ENCODE measurements at regions of chr17 and their contacts with region 1.

Region 1: DNA sequence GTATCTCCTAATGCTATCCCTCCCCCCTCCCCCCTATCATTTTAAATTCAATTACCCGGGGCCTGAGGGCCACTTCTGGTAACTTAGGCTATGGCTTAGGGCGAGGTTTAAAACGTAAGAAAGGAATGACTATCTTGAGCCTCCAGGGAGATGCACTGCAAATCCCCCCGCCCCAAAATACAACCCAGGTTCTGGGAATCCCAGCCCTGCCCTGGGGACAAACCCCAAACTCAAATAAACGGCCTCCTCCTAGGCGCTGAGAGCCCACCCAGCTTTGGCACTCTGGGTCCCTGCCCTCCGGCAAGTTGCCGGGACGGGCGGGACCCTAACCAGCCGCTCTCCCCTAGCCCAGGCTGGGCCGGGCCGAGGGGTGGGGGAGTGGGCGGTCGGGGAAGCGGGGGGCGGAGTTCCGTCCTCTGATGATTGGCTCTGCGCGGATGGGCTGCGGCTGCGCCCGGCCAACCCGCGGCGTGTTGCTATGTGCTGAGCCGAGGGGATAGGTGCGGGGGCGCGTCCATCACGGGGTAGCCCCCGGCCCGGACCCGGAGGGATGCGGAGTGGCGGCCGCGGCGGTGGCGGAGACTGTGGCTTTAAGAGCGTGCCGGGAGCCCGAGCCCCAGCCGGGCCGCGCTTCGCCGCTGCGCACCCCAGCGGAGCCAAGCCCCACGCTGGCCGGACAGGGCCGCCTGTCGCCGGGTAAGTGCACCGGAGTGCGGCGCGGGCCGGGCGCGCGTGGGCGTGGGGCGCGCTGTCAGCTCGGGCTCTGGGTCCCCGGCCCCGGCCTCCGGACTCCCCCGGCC is at the start of gene YPEL2:
- DNase-seq: peak; percentile 91
- H3K4me3 Mint-ChIP-seq: peak within 1 kb of the TSS; percentile 85
- H3K27ac Mint-ChIP-seq: peak within 1 kb of the TSS; percentile 89
- H3K4me1 Mint-ChIP-seq: peaks cover 69% of the 10 kb centered on the region
- H3K27me3 Mint-ChIP-seq: no peaks in the 10 kb centered on the region
- total RNA-seq, gene YPEL2: 9.4 to 13.2 TPM

Region 2: DNA sequence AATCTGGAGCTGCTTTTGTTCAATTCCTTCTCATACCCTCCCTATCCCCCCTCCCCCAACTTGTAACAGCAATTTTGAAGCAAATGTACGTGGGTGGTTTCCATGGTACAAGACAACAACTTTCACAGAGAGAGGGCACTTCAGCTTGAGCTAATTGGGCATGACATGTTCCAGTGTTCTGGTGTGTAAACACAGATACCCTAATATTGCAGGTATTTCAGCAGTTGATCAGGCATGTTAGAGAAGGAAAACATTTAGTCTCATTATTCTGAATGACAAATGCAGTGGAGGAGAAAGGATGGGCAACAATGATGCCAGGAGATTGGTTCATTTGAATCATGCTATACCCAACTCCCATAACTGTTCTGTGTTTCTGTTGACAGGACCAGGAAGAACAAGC is 362.2 kb before region 1 on chr17:
- CTCF ChIA-PET with region 1: no interaction called
- POLR2A ChIA-PET with region 1: no interaction called
- DNase-seq: no peak
- H3K4me3 Mint-ChIP-seq: no peak overlapping the region
- H3K27ac Mint-ChIP-seq: no peak overlapping the region
- H3K4me1 Mint-ChIP-seq: peaks cover 12% of the 10 kb centered on the region
- H3K27me3 Mint-ChIP-seq: peaks cover 10% of the 10 kb centered on the region

Region 3: DNA sequence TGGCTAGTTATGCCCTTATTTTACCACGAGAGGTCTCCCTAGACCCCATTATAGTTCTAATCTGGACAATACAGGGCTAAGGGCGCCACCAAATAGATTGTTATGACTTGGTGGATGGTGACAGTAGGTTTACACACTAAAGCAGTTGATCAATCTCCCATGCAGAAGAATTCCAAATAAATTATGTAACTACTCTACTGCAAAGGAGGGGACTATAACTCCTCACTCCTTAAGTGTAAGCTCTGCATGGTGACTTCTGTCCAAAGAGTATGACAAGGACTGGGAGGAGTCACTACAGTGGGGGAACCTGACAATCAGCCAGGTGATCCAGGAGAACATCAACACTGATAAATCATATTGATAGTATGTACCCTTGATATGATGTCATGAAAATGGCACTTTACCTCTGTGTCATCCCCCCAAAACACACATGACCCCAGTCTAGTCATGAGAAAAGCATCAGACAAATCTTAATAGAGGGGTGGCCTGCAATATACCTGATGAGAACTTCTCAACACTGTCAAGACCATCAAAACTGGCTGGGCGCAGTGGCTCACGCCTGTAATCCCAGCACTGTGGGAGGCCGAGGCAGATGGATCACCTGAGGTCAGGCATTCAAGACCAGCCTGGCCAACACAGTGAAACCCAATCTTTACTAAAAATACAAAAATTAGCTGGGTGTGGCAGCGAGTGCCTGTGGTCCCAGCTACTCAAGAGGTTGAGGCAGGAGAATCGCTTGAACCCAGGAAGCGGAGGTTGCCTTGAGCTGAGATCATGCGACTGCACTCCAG is 20.0 kb before region 1 on chr17:
- CTCF ChIA-PET with region 1: interaction called, 22 read pairs
- POLR2A ChIA-PET with region 1: no interaction called
- DNase-seq: peak; percentile 63
- H3K4me3 Mint-ChIP-seq: no peak overlapping the region
- H3K27ac Mint-ChIP-seq: no peak overlapping the region
- H3K4me1 Mint-ChIP-seq: peaks cover 7% of the 10 kb centered on the region
- H3K27me3 Mint-ChIP-seq: peaks cover 1% of the 10 kb centered on the region

Region 4: GRCh38 chr17:59361916-59362810 is 30.8 kb after region 1 on chr17:
- CTCF ChIA-PET with region 1: interaction called, 10 read pairs
- POLR2A ChIA-PET with region 1: interaction called, 4 read pairs
- DNase-seq: peak; percentile 68
- H3K4me3 Mint-ChIP-seq: peak overlapping the region; percentile 73
- H3K27ac Mint-ChIP-seq: peak overlapping the region; percentile 86
- H3K4me1 Mint-ChIP-seq: peaks cover 85% of the 10 kb centered on the region
- H3K27me3 Mint-ChIP-seq: no peaks in the 10 kb centered on the region

Region 5: GRCh38 chr17:59399900-59400299 is 68.6 kb after region 1 on chr17:
- CTCF ChIA-PET with region 1: no interaction called
- POLR2A ChIA-PET with region 1: no interaction called
- DNase-seq: no peak
- H3K4me3 Mint-ChIP-seq: no peak overlapping the region
- H3K27ac Mint-ChIP-seq: no peak overlapping the region
- H3K4me1 Mint-ChIP-seq: no peaks in the 10 kb centered on the region
- H3K27me3 Mint-ChIP-seq: no peaks in the 10 kb centered on the region

Region 6: GRCh38 chr17:59427425-59427921 is 96.1 kb after region 1 on chr17:
- CTCF ChIA-PET with region 1: interaction called, 10 read pairs
- POLR2A ChIA-PET with region 1: no interaction called
- DNase-seq: peak; percentile 18
- H3K4me3 Mint-ChIP-seq: no peak overlapping the region
- H3K27ac Mint-ChIP-seq: no peak overlapping the region
- H3K4me1 Mint-ChIP-seq: peaks cover 18% of the 10 kb centered on the region
- H3K27me3 Mint-ChIP-seq: peaks cover 4% of the 10 kb centered on the region

Region 7: DNA sequence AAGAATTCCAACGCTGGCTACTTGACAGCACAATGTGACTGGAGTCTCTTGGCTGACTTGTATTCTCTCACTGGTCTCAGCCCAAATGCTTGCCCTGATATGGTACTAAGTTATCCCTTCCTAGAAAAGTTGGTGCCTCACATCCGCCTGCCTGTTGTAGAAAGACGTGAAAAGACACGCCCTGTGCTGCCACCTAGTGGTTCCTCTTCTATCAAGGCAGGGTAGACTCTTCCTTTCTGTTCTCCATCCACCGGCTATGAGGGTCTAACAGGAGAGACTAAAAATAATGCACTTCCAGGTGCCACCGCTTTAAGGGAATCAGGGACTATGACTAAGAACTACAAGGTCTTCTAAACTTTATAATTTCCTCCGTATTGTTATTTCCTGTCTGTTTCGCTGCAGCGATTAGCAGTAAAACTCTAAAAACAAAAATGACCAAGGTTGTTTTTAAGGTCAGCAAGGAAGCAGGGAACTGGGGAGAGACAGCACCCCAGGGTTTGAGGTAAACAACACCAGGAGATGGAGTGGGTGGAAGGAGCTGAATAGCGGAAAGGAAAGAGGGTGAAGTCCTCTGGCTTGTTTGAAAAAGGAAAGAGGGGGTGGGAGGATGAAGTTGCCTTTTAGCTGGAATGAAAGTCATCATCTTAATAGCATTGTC is 109.6 kb after region 1 on chr17:
- CTCF ChIA-PET with region 1: interaction called, 31 read pairs
- POLR2A ChIA-PET with region 1: interaction called, 3 read pairs
- DNase-seq: peak; percentile 94
- H3K4me3 Mint-ChIP-seq: peak overlapping the region; percentile 37
- H3K27ac Mint-ChIP-seq: peak overlapping the region; percentile 90
- H3K4me1 Mint-ChIP-seq: peaks cover 56% of the 10 kb centered on the region
- H3K27me3 Mint-ChIP-seq: no peaks in the 10 kb centered on the region